ENCODE measurements at regions of chr7 and their contacts with region 1.

Region 1: DNA sequence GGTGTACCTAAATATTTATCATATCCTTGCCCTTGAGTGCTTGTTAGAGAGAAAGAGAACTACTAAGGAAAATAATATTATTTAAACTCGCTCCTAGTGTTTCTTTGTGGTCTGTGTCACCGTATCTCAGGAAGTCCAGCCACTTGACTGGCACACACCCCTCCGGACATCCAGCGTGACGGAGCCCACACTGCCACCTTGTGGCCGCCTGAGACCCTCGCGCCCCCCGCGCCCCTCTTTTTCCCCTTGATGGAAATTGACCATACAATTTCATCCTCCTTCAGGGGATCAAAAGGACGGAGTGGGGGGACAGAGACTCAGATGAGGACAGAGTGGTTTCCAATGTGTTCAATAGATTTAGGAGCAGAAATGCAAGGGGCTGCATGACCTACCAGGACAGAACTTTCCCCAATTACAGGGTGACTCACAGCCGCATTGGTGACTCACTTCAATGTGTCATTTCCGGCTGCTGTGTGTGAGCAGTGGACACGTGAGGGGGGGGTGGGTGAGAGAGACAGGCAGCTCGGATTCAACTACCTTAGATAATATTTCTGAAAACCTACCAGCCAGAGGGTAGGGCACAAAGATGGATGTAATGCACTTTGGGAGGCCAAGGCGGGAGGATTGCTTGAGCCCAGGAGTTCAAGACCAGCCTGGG is 11.4 kb downstream of the SERPINE1 start:
- DNase-seq: peak; percentile 97
- ATAC-seq: peak; percentile 88
- H3K4me3 Mint-ChIP-seq: peak overlapping the region; percentile 62
- H3K27ac Mint-ChIP-seq: peak overlapping the region; percentile 86
- H3K4me1 Mint-ChIP-seq: peaks cover 49% of the 10 kb centered on the region
- H3K27me3 Mint-ChIP-seq: peaks cover 9% of the 10 kb centered on the region
- CTCF ChIP-seq: peak; percentile 94

Region 2: GRCh38 chr7:101085162-101085987 is 53.0 kb before region 1 on chr7 and contains the start of gene TRIM56:
- CTCF ChIA-PET with region 1: interaction called, 22 read pairs
- POLR2A ChIA-PET with region 1: interaction called, 8 read pairs
- intact Hi-C with region 1: no loop called
- DNase-seq: peak; percentile 88
- ATAC-seq: peak; percentile 92
- H3K4me3 Mint-ChIP-seq: peak within 1 kb of the TSS; percentile 95
- H3K27ac Mint-ChIP-seq: peak within 1 kb of the TSS; percentile 98
- H3K4me1 Mint-ChIP-seq: peaks cover 31% of the 10 kb centered on the region
- H3K27me3 Mint-ChIP-seq: no peaks in the 10 kb centered on the region
- CTCF ChIP-seq: no peak
- total RNA-seq, gene TRIM56: 40.1 to 42.3 TPM

Region 3: DNA sequence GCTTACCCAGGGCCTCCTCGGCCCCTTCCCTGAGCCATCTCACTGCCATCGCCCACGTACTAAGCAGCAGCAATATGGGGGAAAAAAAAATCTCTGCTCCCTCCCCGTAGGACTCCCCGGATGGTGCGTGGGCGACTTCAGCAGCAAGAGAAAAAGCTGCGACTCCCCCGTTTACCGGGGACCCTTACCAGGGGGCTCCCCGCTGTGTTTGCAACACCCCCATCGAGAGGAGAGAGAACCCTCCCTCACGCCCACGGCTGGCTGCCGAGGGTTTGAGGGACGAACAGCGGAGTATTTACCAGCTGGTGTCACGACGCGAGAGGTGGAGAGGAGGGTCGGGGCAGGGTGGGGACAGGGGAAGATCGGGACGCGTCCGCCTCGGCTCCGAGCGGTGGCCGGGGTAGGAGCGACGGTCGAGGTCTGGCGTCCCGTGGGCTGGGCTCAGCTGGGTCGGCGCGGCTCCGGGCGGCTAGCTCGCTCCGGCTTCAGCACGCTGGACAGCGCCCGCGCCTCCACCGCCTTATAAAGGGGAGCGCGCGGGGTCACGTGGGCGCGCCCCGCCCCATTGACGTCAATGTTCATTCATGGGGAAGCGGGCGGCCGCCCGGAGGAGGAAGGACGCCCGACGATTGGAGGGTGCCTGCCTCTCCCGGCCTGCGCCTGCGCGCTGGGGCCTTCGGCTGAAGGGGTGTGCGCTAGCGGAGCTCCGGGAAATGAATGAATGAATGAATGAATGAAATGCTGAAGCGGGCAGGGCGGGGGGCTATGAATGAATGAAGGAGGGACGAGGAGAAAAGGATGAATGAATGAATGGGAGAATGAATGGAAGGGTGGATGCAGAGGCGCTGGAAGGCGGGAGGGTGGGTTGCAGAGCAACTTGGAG is 27.0 kb after region 1 on chr7 and contains the start of gene VGF:
- CTCF ChIA-PET with region 1: interaction called, 30 read pairs
- POLR2A ChIA-PET with region 1: no interaction called
- intact Hi-C with region 1: no loop called
- DNase-seq: peak; percentile 96
- ATAC-seq: peak; percentile 75
- H3K4me3 Mint-ChIP-seq: peak within 1 kb of the TSS; percentile 69
- H3K27ac Mint-ChIP-seq: no peak within 1 kb of the TSS
- H3K4me1 Mint-ChIP-seq: peaks cover 53% of the 10 kb centered on the region
- H3K27me3 Mint-ChIP-seq: peaks cover 54% of the 10 kb centered on the region
- CTCF ChIP-seq: no peak
- total RNA-seq, gene VGF: not detected

Region 4: GRCh38 chr7:101185258-101185839 is 47.0 kb after region 1 on chr7:
- CTCF ChIA-PET with region 1: interaction called, 280 read pairs
- POLR2A ChIA-PET with region 1: no interaction called
- intact Hi-C with region 1: no loop called
- DNase-seq: no peak
- ATAC-seq: no peak
- H3K4me3 Mint-ChIP-seq: no peak overlapping the region
- H3K27ac Mint-ChIP-seq: no peak overlapping the region
- H3K4me1 Mint-ChIP-seq: peaks cover 3% of the 10 kb centered on the region
- H3K27me3 Mint-ChIP-seq: peaks cover 22% of the 10 kb centered on the region
- CTCF ChIP-seq: no peak

Region 5: DNA sequence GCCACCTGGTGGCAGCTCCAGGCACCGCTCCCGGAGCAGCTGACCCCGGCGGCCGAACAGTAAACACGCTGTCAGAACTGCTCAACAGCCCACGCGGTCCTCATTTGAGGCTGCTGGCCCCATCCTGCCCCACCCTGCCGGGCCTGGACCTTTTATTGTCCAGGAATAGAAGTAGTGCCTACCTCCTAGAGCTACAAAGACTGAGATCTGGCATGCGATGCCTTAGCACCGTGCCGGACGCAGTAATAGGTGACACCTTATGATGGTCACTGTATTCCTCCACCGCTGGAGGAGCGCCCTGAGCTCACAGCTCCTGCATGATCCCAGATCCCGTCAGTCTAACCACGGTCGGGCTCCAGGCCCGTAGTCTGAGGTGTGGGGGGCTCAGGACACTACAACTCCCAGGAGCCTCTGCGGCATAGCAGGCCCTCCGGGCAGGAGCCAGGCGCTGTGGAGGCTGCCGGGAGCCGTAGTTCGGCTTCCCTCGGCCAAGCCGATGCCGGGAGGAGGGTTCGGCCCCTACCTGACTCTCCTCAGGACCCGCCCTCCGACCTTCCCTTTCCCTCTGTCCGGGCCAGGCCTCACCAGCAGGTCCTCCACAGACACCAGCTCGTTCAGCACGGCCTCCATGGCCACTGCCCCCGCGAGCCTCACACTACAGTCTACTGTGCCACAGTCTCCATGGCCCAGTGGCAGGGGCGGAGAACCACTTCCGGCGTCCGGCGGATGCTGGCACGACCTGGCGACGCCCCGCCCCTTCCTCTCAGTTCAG is 106.2 kb after region 1 on chr7 and contains the start of gene FIS1:
- CTCF ChIA-PET with region 1: interaction called, 34 read pairs
- POLR2A ChIA-PET with region 1: no interaction called
- intact Hi-C with region 1: no loop called
- DNase-seq: peak; percentile 97
- ATAC-seq: peak; percentile 95
- H3K4me3 Mint-ChIP-seq: peak within 1 kb of the TSS; percentile 85
- H3K27ac Mint-ChIP-seq: peak within 1 kb of the TSS; percentile 97
- H3K4me1 Mint-ChIP-seq: peaks cover 28% of the 10 kb centered on the region
- H3K27me3 Mint-ChIP-seq: no peaks in the 10 kb centered on the region
- CTCF ChIP-seq: peak; percentile 69
- total RNA-seq, gene FIS1: 86.5 to 96.8 TPM